ENCODE measurements at regions of chr19 and their contacts with region 1.

Region 1: DNA sequence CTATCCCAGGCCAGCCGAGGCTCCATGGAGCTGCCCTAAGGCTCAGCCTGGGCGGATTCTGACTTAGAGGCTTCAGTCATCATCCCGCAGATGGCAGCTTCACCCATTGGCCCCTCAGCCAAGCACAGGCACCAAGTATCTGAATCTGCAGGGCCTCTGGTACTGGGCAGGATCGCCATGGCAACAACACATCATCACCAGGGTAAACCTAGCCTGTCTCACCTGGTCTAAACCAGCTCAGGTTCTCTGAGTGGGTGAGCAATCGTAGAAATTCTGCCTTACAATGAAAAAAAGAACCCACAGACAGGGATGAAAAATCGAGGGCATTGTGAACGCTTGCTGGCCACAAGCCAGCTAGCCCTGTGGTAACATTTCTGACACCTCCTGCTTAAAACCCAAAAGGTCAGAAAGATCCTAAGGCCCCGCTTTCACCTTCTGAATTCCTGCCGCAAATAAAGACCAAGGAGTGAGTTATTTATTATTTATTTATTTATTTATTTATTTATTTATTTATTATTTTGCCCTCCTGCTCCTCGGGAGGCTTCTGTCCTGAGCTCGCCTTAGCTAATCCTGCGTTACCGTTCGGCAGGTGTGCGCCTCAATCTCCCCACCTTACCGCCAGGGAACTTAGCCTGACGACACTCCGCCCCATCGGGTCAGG is 12.0 kb upstream of the CEACAM21 start:
- H3K4me3 Mint-ChIP-seq: peak overlapping the region; percentile 49
- H3K27ac Mint-ChIP-seq: no peak overlapping the region
- H3K4me1 Mint-ChIP-seq: peaks cover 20% of the 10 kb centered on the region
- H3K27me3 Mint-ChIP-seq: peaks cover 43% of the 10 kb centered on the region

Region 2: DNA sequence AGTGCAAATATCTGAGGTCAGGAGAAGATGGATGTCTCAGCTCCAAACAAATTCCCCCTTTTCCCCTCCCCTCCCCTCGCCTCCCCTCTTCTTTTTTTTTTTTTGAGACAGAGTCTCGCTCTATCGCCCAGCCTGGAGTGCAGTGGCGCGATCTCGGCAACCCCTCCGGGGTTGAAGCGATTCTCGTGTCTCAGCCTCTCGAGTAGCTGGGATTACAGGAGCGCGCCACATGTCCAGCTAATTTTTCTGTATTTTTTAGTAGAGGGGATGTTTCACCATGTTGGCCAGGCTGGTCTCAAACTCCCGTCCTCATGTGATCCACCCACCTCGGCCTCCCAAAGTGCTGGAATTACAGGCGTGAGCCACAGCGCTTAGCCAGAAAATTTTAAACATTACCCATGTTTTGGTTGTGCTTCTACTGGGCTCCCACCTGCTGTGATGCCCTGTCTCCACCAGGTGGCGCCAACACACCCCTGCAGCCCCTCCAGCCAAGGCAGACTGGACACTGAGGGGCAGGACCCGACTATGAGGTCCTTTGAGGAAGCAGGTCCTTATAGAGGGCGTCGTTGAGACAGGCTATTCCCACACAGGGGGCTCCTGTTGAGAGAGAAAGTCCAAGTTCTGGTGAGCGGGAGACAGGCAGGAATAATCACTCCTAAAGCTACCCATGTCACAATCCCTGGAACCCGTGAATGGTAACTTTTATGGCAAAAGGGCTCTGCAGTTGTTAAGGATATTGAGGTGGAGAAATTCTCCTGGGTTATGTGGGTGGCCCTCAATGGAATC is 114.7 kb before region 1 on chr19:
- intact Hi-C with region 1: loop called (anchors 2 kb)
- H3K4me3 Mint-ChIP-seq: peak overlapping the region; percentile 64
- H3K27ac Mint-ChIP-seq: peak overlapping the region; percentile 43
- H3K4me1 Mint-ChIP-seq: peaks cover 15% of the 10 kb centered on the region
- H3K27me3 Mint-ChIP-seq: peaks cover 32% of the 10 kb centered on the region

Region 3: DNA sequence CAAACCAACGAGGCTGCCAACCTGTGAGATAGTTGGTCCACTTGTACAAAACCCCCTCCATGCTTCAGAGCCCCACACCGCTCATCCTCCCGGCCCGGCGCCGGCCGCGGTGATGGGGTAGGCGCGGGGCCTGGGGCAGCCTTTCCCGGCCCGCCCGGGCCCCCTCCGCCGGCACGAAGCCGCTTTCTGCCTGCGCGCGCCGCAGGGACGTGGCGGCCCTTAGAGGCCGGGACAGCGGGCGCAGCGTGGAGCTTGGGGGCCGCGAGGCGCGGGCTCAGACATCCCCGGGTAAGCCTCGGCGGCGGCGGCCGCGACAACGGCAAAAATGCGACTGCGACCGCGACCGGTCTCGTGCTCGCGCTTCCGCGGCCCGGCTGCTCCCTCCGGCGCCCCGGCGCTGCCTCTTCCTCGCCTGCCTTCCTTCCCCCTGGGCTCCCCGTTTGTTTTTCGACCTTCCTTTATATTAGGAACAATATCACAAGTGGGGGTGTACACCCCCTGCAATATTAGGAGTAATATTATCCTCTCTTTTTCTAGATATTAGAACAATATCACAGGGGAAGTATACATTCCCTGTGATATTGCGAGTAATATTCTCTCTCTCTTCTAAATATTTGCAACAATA is 41.9 kb before region 1 on chr19:
- intact Hi-C with region 1: loop called (anchors 2 kb)
- H3K4me3 Mint-ChIP-seq: peak overlapping the region; percentile 68
- H3K27ac Mint-ChIP-seq: peak overlapping the region; percentile 84
- H3K4me1 Mint-ChIP-seq: peaks cover 62% of the 10 kb centered on the region
- H3K27me3 Mint-ChIP-seq: no peaks in the 10 kb centered on the region